ENCODE measurements at regions of chr5 and their contacts with region 1.

Region 1: DNA sequence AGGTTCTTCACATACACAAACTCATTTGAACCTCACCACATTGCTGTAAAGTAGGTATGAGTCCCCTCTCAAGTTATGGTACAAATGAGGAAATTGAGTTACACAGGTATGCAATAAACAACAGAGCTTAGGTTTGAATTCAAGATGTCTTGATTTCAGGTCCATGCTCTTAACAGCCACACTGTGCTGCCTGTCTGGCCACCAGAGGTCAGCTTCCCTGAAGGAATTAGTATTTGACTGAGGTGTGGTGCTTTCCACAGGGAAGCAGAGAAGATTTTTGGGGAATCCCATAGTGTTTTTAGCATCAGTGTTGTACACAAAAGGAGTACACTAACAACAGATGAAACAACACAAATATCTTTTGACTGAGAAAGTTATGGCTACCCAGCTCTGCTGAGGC is 94.4 kb upstream of the ITGA1 start:
- DNase-seq: peak; percentile 56
- H3K4me3 ChIP-seq: no peak overlapping the region
- H3K27ac ChIP-seq: no peak overlapping the region
- H3K4me1 ChIP-seq: no peaks in the 10 kb centered on the region
- H3K27me3 ChIP-seq: peaks cover 2% of the 10 kb centered on the region in 2 experiments
- CTCF ChIP-seq: peak; percentile 52 to 64
- POLR2A ChIP-seq: no peak

Region 2: DNA sequence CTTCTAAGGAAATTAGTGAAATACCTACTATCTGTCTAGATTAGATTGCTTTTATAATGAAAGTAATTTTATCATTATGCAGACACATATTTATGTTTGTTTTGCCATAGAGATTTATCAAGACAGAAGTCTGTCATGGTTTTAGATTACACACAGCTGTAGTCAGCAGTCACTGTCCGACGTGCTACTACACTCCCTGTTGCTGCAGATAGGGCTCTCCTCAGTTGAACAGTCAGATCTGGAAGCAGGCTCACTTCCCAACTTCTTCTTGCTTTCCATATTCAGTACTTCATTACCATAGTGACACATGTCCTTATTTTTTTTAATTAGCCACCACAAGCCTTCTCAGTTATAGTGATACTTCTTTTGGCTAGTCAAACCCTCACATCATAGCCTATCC is 235.5 kb before region 1 on chr5:
- CTCF ChIA-PET with region 1: no interaction called
- POLR2A ChIA-PET with region 1: no interaction called
- dilution Hi-C with region 1: no loop called
- intact Hi-C with region 1: no loop called
- DNase-seq: no peak
- H3K4me3 ChIP-seq: no peak overlapping the region
- H3K27ac ChIP-seq: no peak overlapping the region
- H3K4me1 ChIP-seq: no peaks in the 10 kb centered on the region
- H3K27me3 ChIP-seq: no peaks in the 10 kb centered on the region
- CTCF ChIP-seq: no peak
- POLR2A ChIP-seq: no peak

Region 3: GRCh38 chr5:52709171-52709925 is 16.1 kb after region 1 on chr5:
- CTCF ChIA-PET with region 1: interaction called, 6 read pairs
- POLR2A ChIA-PET with region 1: no interaction called
- dilution Hi-C with region 1: no loop called
- intact Hi-C with region 1: loop called (anchors 1 kb)
- DNase-seq: peak; percentile 31
- H3K4me3 ChIP-seq: no peak overlapping the region
- H3K27ac ChIP-seq: no peak overlapping the region
- H3K4me1 ChIP-seq: peaks cover 25% of the 10 kb centered on the region
- H3K27me3 ChIP-seq: no peaks in the 10 kb centered on the region
- CTCF ChIP-seq: no peak
- POLR2A ChIP-seq: no peak

Region 4: GRCh38 chr5:52743970-52744369 is 50.7 kb after region 1 on chr5:
- CTCF ChIA-PET with region 1: interaction called, 11 read pairs
- POLR2A ChIA-PET with region 1: no interaction called
- dilution Hi-C with region 1: no loop called
- intact Hi-C with region 1: loop called (anchors 1 kb)
- DNase-seq: peak; percentile 88
- H3K4me3 ChIP-seq: no peak overlapping the region
- H3K27ac ChIP-seq: peak overlapping the region; percentile 70
- H3K4me1 ChIP-seq: peaks cover 28% of the 10 kb centered on the region
- H3K27me3 ChIP-seq: no peaks in the 10 kb centered on the region
- CTCF ChIP-seq: no peak
- POLR2A ChIP-seq: no peak

Region 5: GRCh38 chr5:52787600-52788504 is 94.6 kb after region 1 on chr5 and contains the starts of genes ITGA1 and PELO:
- CTCF ChIA-PET with region 1: interaction called, 12 read pairs
- POLR2A ChIA-PET with region 1: no interaction called
- dilution Hi-C with region 1: no loop called
- intact Hi-C with region 1: loop called (anchors 1 kb)
- DNase-seq: peak; percentile 77
- H3K4me3 ChIP-seq: peak within 1 kb of the TSS; percentile 35 to 80 (median 62)
- H3K27ac ChIP-seq: peak within 1 kb of the TSS; percentile 19
- H3K4me1 ChIP-seq: peaks cover 11% of the 10 kb centered on the region
- H3K27me3 ChIP-seq: no peaks in the 10 kb centered on the region
- CTCF ChIP-seq: peak; percentile 16 to 51
- POLR2A ChIP-seq: no peak
- total RNA-seq, gene ITGA1: 1.9 and 3.3 TPM in 2 replicates
- total RNA-seq, gene PELO: 10.2 and 13.2 TPM in 2 replicates

Region 6: DNA sequence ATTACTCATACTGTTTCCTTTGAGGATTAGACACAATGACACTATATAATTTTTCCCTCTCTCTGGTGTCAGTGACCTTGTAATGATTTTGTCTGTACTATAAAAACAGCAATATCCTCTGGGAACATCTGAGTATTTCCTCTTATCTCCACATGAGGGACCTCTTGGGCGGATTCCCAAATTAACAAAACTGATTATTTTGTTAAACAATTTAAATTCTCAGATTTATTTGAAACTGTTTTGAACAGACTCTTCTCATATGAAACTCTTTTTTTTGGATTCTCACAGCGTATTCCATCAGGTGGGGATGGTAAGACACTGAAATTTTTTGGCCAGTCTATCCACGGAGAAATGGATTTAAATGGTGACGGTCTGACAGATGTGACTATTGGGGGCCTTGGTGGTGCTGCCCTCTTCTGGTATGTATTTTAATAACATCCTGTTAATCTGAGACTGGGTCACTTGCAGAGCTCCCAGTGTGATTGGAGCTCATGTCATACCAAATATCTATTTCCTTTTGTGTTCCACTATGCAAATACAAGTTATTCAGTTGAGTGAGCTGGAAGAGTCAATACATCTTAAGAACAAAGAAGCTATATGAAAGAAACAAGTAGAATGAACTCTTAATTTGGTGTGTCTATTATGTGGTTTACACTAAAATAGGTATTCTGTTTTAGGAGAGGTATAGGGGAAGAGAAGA is 222.0 kb after region 1 on chr5:
- CTCF ChIA-PET with region 1: interaction called, 96 read pairs
- POLR2A ChIA-PET with region 1: no interaction called
- dilution Hi-C with region 1: no loop called
- intact Hi-C with region 1: loop called (anchors 1 kb)
- DNase-seq: peak; percentile 88
- H3K4me3 ChIP-seq: peak overlapping the region in 2 of 3 experiments; percentile 12 to 46
- H3K27ac ChIP-seq: no peak overlapping the region
- H3K4me1 ChIP-seq: peaks cover 7% of the 10 kb centered on the region
- H3K27me3 ChIP-seq: no peaks in the 10 kb centered on the region
- CTCF ChIP-seq: peak; percentile 53 to 58
- POLR2A ChIP-seq: no peak

Measured in endothelial cell of umbilical vein (primary cell).